HCT116 (cell line): ENCODE measurements at regions of chr2 and their contacts with region 1.

Region 1: GRCh38 chr2:46776687-46777327 is 138.8 kb downstream of the MCFD2 start:
- DNase-seq: peak; percentile 54
- ATAC-seq: peak; percentile 71
- H3K4me3 ChIP-seq: no peak overlapping the region
- H3K27ac ChIP-seq: no peak overlapping the region
- H3K4me1 ChIP-seq: peaks cover 16 to 48% of the 10 kb centered on the region in 2 experiments
- H3K27me3 ChIP-seq: no peaks in the 10 kb centered on the region
- CTCF ChIP-seq: peak; percentile 70 to 83 (median 82); a peak in 5 of 6 replicates
- POLR2A ChIP-seq: no peak
- RAD21 ChIP-seq: peak; percentile 79

Region 2: DNA sequence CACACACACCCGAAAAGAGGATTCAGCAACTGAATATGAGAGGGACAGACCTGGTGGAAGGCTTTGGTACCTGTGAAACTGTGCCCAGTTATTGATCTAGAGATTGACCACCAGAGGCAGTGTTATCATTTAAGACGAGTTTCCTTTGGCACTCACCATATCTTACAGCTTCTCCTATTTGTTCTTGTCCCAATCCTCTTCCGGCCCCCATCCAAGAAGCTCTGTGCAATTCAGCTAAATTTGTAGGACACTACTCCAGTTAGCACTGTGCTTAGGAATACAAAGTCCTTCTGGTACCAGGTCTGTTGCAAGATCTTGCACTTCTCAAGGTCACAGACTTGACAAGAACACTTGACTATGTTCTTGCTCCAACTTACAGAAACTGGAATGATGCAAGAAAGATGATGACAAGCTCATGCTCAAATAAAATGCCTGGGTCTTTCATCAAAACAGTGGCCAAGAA is 119.7 kb before region 1 on chr2:
- CTCF ChIA-PET with region 1: interaction called, 6 read pairs
- POLR2A ChIA-PET with region 1: no interaction called
- RAD21 ChIA-PET with region 1: interaction called in 1 of 2 experiments, 4 read pairs
- intact Hi-C with region 1: loop called (anchors 5 kb)
- DNase-seq: peak; percentile 54
- ATAC-seq: peak; percentile 96
- H3K4me3 ChIP-seq: no peak overlapping the region
- H3K27ac ChIP-seq: no peak overlapping the region
- H3K4me1 ChIP-seq: peaks cover 0 to 16% of the 10 kb centered on the region in 2 experiments; a peak in 3 of 4 replicates
- H3K27me3 ChIP-seq: no peaks in the 10 kb centered on the region
- CTCF ChIP-seq: peak; percentile 61 to 66 (median 65)
- POLR2A ChIP-seq: no peak
- RAD21 ChIP-seq: peak; percentile 72

Region 3: DNA sequence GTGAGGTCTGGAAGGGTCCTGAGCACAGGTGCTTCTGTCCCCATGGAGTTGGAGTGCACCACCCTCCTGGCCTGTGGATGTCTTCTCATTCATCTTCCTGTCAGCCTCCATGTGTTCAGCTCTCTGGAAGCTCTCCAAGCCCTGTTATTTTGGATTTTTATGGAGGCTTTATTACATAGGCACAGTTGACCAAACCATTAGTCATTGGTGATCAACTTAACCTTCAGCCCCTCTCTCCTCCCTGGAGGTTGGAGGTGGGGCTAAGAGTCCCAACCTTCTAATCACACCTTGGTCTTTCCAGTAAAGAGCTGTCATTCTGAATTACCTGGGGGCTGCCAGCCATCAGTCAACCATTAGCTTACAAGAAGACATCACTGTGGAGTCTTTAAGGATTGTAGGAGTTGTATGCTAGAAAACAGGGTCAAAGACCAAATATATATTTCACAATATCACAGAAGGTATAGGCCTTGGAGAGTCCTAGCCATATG is 146.3 kb after region 1 on chr2:
- CTCF ChIA-PET with region 1: no interaction called
- POLR2A ChIA-PET with region 1: no interaction called
- RAD21 ChIA-PET with region 1: no interaction called
- intact Hi-C with region 1: no loop called
- DNase-seq: no peak
- ATAC-seq: peak; percentile 62; the same call in 1 of the 2 replicates
- H3K4me3 ChIP-seq: no peak overlapping the region
- H3K27ac ChIP-seq: no peak overlapping the region
- H3K4me1 ChIP-seq: peaks cover 3 to 30% of the 10 kb centered on the region in 2 experiments; a peak in 2 of 4 replicates
- H3K27me3 ChIP-seq: no peaks in the 10 kb centered on the region
- CTCF ChIP-seq: no peak
- POLR2A ChIP-seq: no peak
- RAD21 ChIP-seq: no peak